Endothelial cell of umbilical vein (primary cell): ENCODE measurements at regions of chr5 and their contacts with region 1.

Region 1: DNA sequence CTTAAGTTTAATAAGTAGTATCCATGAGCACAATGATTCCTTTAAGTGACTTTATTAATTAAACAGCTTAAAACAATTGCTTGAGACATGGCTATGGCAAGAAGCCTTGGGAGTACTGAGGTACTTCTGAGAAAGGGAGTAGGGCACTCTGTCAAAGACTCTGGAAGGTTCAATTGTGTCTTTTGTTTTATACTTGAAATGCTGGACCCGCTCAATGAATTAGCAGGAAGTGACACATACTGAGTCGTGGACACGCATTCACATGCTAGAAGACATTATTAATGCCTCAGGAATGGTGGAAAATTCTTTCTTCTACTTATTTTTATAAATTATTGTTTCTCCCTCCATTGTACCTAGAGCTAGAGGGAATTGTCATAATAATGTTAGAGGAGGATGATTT is 347.3 kb upstream of the ZNF608 start:
- DNase-seq: peak; percentile 90
- H3K4me3 ChIP-seq: no peak overlapping the region
- H3K27ac ChIP-seq: peak overlapping the region; percentile 83
- H3K4me1 ChIP-seq: peaks cover 12% of the 10 kb centered on the region
- H3K27me3 ChIP-seq: no peaks in the 10 kb centered on the region
- CTCF ChIP-seq: no peak
- POLR2A ChIP-seq: no peak

Region 2: GRCh38 chr5:124605541-124605940 is 488.2 kb before region 1 on chr5:
- CTCF ChIA-PET with region 1: no interaction called
- POLR2A ChIA-PET with region 1: no interaction called
- dilution Hi-C with region 1: no loop called
- intact Hi-C with region 1: loop called (anchors 10 kb)
- DNase-seq: peak; percentile 97
- H3K4me3 ChIP-seq: no peak overlapping the region
- H3K27ac ChIP-seq: peak overlapping the region; percentile 86
- H3K4me1 ChIP-seq: peaks cover 44% of the 10 kb centered on the region
- H3K27me3 ChIP-seq: no peaks in the 10 kb centered on the region
- CTCF ChIP-seq: no peak
- POLR2A ChIP-seq: no peak

Region 3: DNA sequence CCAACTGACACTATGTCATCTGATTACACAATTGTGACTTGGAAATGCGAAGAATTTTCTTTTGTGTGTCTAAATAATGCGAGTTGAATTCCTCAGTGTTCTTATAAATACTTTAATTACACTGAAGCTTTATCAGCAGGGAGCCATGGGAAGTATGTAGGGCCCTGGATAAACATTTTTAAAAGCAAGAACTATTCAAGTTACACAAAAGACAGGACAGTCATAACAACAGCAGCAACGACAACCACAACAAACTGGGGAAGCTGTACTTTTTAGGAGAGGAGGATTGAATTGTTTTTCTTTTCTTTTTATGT is 97.1 kb before region 1 on chr5:
- CTCF ChIA-PET with region 1: no interaction called
- POLR2A ChIA-PET with region 1: no interaction called
- dilution Hi-C with region 1: no loop called
- intact Hi-C with region 1: loop called (anchors 5 kb)
- DNase-seq: peak; percentile 68
- H3K4me3 ChIP-seq: no peak overlapping the region
- H3K27ac ChIP-seq: no peak overlapping the region
- H3K4me1 ChIP-seq: peaks cover 8% of the 10 kb centered on the region
- H3K27me3 ChIP-seq: no peaks in the 10 kb centered on the region
- CTCF ChIP-seq: no peak
- POLR2A ChIP-seq: no peak